ENCODE measurements at regions of chr7 and their contacts with region 1.

Region 1: DNA sequence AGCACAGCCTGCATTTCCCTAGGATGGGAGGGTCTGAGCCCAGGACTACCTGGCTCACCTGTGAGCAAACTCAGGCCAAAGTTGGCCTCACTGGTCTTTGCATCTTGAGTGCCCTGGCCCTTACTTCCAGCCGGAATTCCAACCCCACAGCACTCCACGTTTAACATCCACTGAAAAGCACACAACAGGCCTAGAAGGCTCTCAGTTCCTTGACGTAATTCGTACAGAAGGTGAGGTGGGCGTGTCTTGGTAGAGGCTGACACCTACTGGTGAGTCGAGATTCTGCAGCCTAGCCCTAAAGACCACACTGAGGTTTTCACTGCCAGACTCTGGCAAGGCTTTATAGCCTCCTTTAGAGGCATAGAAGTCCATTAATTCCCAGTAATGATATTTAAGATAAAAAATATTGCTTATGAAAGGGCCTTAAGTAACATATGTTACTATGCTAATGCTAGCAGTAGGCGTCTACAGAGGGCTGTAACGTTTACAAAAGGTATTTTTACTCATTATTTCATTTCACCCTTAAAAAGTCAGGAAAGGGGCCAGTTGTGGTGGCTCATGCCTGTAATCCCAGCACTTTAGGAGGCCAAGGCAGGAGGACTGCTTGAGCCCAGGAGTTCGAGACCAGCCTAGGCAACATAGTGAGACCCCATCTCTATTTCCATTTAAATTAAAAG is 95.8 kb downstream of the HIP1 start:
- DNase-seq: peak; percentile 81
- H3K4me3 Mint-ChIP-seq: no peak overlapping the region
- H3K27ac Mint-ChIP-seq: no peak overlapping the region
- H3K4me1 Mint-ChIP-seq: peaks cover 9% of the 10 kb centered on the region
- H3K27me3 Mint-ChIP-seq: no peaks in the 10 kb centered on the region

Region 2: GRCh38 chr7:75072978-75073282 is 570.0 kb before region 1 on chr7:
- CTCF ChIA-PET with region 1: no interaction called
- intact Hi-C with region 1: loop called (anchors 5 kb)
- DNase-seq: peak; percentile 31
- H3K4me3 Mint-ChIP-seq: peak overlapping the region; percentile 95
- H3K27ac Mint-ChIP-seq: peak overlapping the region; percentile 95
- H3K4me1 Mint-ChIP-seq: peaks cover 13% of the 10 kb centered on the region
- H3K27me3 Mint-ChIP-seq: no peaks in the 10 kb centered on the region

Region 3: DNA sequence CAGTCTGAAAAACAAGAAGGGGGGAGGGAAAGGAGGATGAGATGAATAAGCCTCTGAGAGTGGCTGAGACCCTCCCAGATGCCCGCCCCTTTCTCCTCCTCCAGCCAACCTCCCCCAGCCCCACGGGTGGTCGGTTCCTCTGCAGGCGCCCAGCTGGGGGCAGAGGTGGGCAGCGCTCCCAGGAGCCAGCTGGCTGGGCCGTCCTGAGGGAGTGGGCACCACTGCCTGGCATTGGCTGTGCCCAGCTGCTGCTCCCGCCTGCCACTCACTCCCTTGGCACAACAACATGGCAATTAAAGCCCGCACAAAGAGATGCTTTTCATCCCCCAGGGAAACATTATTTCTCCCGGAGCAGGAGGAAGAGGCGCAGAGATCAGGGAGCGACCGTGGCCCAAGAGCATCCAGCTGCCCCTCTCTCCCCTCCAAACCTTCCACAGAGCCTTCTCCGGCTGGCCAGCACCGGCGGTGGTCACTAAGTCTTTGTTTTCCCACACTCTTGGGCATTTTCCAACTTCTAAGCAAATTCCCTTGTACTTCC is 43.6 kb before region 1 on chr7:
- CTCF ChIA-PET with region 1: no interaction called
- intact Hi-C with region 1: no loop called
- DNase-seq: no peak
- H3K4me3 Mint-ChIP-seq: no peak overlapping the region
- H3K27ac Mint-ChIP-seq: no peak overlapping the region
- H3K4me1 Mint-ChIP-seq: peaks cover 13% of the 10 kb centered on the region
- H3K27me3 Mint-ChIP-seq: no peaks in the 10 kb centered on the region

Region 4: GRCh38 chr7:75617634-75618234 is 25.2 kb before region 1 on chr7:
- CTCF ChIA-PET with region 1: no interaction called
- intact Hi-C with region 1: no loop called
- DNase-seq: peak; percentile 72
- H3K4me3 Mint-ChIP-seq: peak overlapping the region; percentile 41
- H3K27ac Mint-ChIP-seq: peak overlapping the region; percentile 54
- H3K4me1 Mint-ChIP-seq: peaks cover 23% of the 10 kb centered on the region
- H3K27me3 Mint-ChIP-seq: no peaks in the 10 kb centered on the region

Region 5: GRCh38 chr7:75762314-75762917 is 119.5 kb after region 1 on chr7:
- CTCF ChIA-PET with region 1: no interaction called
- intact Hi-C with region 1: loop called (anchors 5 kb)
- DNase-seq: no peak
- H3K4me3 Mint-ChIP-seq: no peak overlapping the region
- H3K27ac Mint-ChIP-seq: no peak overlapping the region
- H3K4me1 Mint-ChIP-seq: no peaks in the 10 kb centered on the region
- H3K27me3 Mint-ChIP-seq: no peaks in the 10 kb centered on the region

Region 6: GRCh38 chr7:76020031-76020714 is 377.2 kb after region 1 on chr7:
- CTCF ChIA-PET with region 1: interaction called, 3 read pairs
- intact Hi-C with region 1: loop called (anchors 10 kb)
- DNase-seq: peak; percentile 83
- H3K4me3 Mint-ChIP-seq: no peak overlapping the region
- H3K27ac Mint-ChIP-seq: no peak overlapping the region
- H3K4me1 Mint-ChIP-seq: peaks cover 3% of the 10 kb centered on the region
- H3K27me3 Mint-ChIP-seq: no peaks in the 10 kb centered on the region

Region 7: DNA sequence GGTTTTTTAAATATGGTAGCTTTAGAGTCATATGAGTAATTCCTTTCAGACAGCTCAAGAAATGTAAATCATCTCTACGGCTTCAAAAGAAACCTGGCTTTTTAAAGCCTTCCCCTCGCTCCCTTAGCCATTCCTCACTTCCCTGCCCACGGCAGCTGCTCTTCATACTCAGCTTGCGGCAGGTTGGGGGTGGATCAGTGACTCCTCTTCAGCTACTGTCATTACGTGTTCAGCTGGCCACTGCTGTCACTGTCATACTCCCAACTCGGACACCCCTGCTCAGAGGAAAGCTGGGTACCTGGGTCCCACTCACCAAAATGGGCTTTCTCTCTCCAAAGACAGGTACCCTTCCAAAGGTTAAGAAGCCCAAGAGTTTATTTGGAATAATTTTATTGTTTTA is 709.2 kb after region 1 on chr7:
- CTCF ChIA-PET with region 1: no interaction called
- intact Hi-C with region 1: no loop called
- DNase-seq: peak; percentile 32
- H3K4me3 Mint-ChIP-seq: no peak overlapping the region
- H3K27ac Mint-ChIP-seq: no peak overlapping the region
- H3K4me1 Mint-ChIP-seq: peaks cover 86% of the 10 kb centered on the region
- H3K27me3 Mint-ChIP-seq: no peaks in the 10 kb centered on the region